ENCODE measurements at regions of chr3 and their contacts with region 1.

Region 1: DNA sequence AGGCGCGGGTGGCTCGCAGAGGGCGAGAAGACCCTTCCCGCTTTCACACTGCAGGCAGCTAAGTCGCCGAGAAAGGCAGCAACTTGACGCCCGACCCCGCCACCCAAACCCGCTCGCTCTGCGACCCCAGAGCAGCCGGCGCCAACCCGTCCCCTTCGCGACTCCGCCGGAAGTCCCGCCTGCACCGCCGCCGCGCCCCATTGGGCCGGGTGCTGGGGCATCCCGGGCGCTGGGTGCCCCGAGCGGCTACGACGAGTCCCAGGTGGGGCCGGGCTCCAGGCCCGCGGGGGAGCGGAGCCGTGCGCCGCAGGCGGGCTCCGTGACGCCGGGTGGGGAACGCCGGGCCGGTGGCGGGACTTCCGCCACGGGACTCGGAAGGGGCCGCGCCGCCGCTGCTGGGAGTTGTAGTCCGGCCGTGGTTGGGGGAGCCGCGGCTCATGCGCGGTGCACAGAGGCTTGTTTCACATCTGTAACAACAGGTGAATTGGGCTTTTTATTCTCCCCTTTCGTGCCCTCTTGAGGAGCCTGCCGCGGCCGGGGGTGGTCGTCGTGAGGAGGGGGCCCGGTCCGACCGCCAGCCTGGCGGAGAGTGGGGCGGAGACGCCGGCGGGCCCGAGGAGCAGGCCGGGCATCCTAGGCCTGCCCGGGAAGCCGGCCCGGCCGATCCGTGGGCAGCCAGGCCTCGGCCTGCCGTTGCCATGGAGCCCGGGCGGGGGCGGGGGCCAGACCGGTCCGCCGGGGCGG is at the start of gene DHX30:
- DNase-seq: peak; percentile 63 to 92 (median 83)
- ATAC-seq: peak; percentile 92
- H3K4me3 ChIP-seq: peak within 1 kb of the TSS; percentile 81 to 95
- H3K4me3 Mint-ChIP-seq: peak within 1 kb of the TSS; percentile 93
- H3K27ac ChIP-seq: peak within 1 kb of the TSS; percentile 73 to 82
- H3K27ac Mint-ChIP-seq: peak within 1 kb of the TSS; percentile 95
- H3K4me1 ChIP-seq: peaks cover 17% of the 10 kb centered on the region
- H3K4me1 Mint-ChIP-seq: peaks cover 21% of the 10 kb centered on the region
- H3K27me3 ChIP-seq: no peaks in the 10 kb centered on the region
- H3K27me3 Mint-ChIP-seq: no peaks in the 10 kb centered on the region
- CTCF ChIP-seq: no peak
- total RNA-seq, gene DHX30: 80.7 to 83.4 TPM

Region 2: GRCh38 chr3:47282424-47283192 is 520.3 kb before region 1 on chr3 and contains the starts of genes KIF9 and KLHL18:
- CTCF ChIA-PET with region 1: no interaction called
- POLR2A ChIA-PET with region 1: no interaction called
- intact Hi-C with region 1: loop called in 1 of 2 experiments (anchors 2 kb)
- DNase-seq: peak; percentile 92 to 99 (median 96)
- ATAC-seq: peak; percentile 86
- H3K4me3 ChIP-seq: peak within 1 kb of the TSS; percentile 75 to 79
- H3K4me3 Mint-ChIP-seq: peak within 1 kb of the TSS; percentile 97
- H3K27ac ChIP-seq: peak within 1 kb of the TSS; percentile 98 to 99
- H3K27ac Mint-ChIP-seq: peak within 1 kb of the TSS; percentile 99
- H3K4me1 ChIP-seq: peaks cover 32% of the 10 kb centered on the region
- H3K4me1 Mint-ChIP-seq: peaks cover 40% of the 10 kb centered on the region
- H3K27me3 ChIP-seq: no peaks in the 10 kb centered on the region
- H3K27me3 Mint-ChIP-seq: no peaks in the 10 kb centered on the region
- CTCF ChIP-seq: no peak
- total RNA-seq, gene KIF9: 11.7 to 12.2 TPM
- total RNA-seq, gene KLHL18: 61.6 to 62.8 TPM

Region 3: DNA sequence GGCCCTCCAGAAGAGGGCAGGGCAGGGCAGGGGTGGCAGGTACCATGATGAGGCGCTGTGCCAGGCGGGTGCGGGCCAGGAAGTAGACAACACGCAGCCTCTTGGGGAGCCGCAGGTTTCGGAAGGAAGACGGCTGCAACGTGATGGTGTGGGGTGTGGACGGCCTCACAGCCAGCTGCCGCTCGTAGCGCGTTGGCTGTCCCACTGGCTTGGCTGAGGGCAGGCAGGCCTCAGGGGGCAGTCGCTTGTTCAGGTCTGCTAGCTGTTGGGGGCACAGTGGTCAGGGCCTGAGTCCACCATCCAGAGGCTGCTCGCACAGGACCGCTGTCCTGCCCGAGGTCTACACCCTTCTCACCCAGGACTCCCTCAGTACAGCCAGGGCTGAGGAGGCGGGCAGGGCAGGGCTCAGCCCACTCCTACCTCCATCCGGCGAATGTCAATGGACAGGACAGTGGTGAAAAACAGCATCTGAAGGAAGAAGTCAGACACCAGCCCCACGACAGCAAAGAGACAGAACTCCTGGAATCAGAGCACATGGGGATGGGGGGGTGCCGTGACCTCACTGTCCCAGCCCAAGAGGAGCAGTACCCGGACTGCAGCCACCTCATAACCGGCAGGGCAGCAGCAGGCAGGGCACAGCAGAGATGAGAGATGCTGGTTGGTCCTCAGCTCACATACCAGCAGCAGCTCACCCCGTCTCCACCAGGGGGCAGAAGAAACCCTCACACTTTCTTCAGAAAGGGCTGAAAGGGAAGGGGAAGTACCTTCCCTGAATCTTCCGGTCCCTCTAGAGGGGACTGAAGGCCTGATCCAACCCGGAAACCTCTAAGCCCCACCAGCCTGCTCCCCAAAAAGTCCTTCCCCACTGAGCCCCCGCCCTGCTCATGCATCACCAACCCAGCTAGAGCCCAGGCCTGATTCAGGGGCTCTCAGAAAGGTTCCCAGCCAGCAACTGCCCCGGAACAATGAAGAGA is 382.1 kb before region 1 on chr3:
- CTCF ChIA-PET with region 1: interaction called, 6 read pairs
- POLR2A ChIA-PET with region 1: no interaction called
- intact Hi-C with region 1: loop called in 1 of 2 experiments (anchors 5 kb)
- DNase-seq: peak; percentile 79 to 93 (median 89)
- ATAC-seq: peak; percentile 99
- H3K4me3 ChIP-seq: peak overlapping the region in 1 of 2 experiments; percentile 32
- H3K4me3 Mint-ChIP-seq: peak overlapping the region; percentile 70
- H3K27ac ChIP-seq: peak overlapping the region; percentile 53 to 90
- H3K27ac Mint-ChIP-seq: peak overlapping the region; percentile 99
- H3K4me1 ChIP-seq: peaks cover 14% of the 10 kb centered on the region
- H3K4me1 Mint-ChIP-seq: peaks cover 15% of the 10 kb centered on the region
- H3K27me3 ChIP-seq: no peaks in the 10 kb centered on the region
- H3K27me3 Mint-ChIP-seq: no peaks in the 10 kb centered on the region
- CTCF ChIP-seq: peak; percentile 91

Region 4: GRCh38 chr3:47513125-47513929 is 289.6 kb before region 1 on chr3 and contains the start of gene ELP6:
- CTCF ChIA-PET with region 1: no interaction called
- POLR2A ChIA-PET with region 1: no interaction called
- intact Hi-C with region 1: loop called (anchors 1 kb)
- DNase-seq: peak; percentile 92 to 99 (median 96)
- ATAC-seq: peak; percentile 91
- H3K4me3 ChIP-seq: peak within 1 kb of the TSS; percentile 85 to 99
- H3K4me3 Mint-ChIP-seq: peak within 1 kb of the TSS; percentile 98
- H3K27ac ChIP-seq: peak within 1 kb of the TSS; percentile 88 to 95
- H3K27ac Mint-ChIP-seq: peak within 1 kb of the TSS; percentile 97
- H3K4me1 ChIP-seq: peaks cover 11% of the 10 kb centered on the region
- H3K4me1 Mint-ChIP-seq: peaks cover 22% of the 10 kb centered on the region
- H3K27me3 ChIP-seq: no peaks in the 10 kb centered on the region
- H3K27me3 Mint-ChIP-seq: no peaks in the 10 kb centered on the region
- CTCF ChIP-seq: peak; percentile 66
- total RNA-seq, gene ELP6: 13.0 to 13.7 TPM

Region 5: GRCh38 chr3:47781685-47782445 is 21.0 kb before region 1 on chr3 and contains the start of gene SMARCC1:
- CTCF ChIA-PET with region 1: no interaction called
- POLR2A ChIA-PET with region 1: no interaction called
- intact Hi-C with region 1: loop called (anchors 1 to 2 kb)
- DNase-seq: peak; percentile 91 to 99 (median 97)
- ATAC-seq: peak; percentile 87
- H3K4me3 ChIP-seq: peak within 1 kb of the TSS; percentile 54 to 91
- H3K4me3 Mint-ChIP-seq: peak within 1 kb of the TSS; percentile 89
- H3K27ac ChIP-seq: peak within 1 kb of the TSS; percentile 87 to 98
- H3K27ac Mint-ChIP-seq: peak within 1 kb of the TSS; percentile 97
- H3K4me1 ChIP-seq: peaks cover 23% of the 10 kb centered on the region
- H3K4me1 Mint-ChIP-seq: peaks cover 31% of the 10 kb centered on the region
- H3K27me3 ChIP-seq: no peaks in the 10 kb centered on the region
- H3K27me3 Mint-ChIP-seq: no peaks in the 10 kb centered on the region
- CTCF ChIP-seq: no peak
- total RNA-seq, gene SMARCC1: 65.4 to 68.2 TPM

Region 6: GRCh38 chr3:47824541-47825473 is 21.9 kb after region 1 on chr3:
- CTCF ChIA-PET with region 1: interaction called, 17 read pairs
- POLR2A ChIA-PET with region 1: interaction called, 4 read pairs
- intact Hi-C with region 1: loop called (anchors 1 kb)
- DNase-seq: peak; percentile 59 to 91 (median 75)
- ATAC-seq: peak; percentile 98
- H3K4me3 ChIP-seq: peak overlapping the region; percentile 67 to 95
- H3K4me3 Mint-ChIP-seq: peak overlapping the region; percentile 88
- H3K27ac ChIP-seq: peak overlapping the region; percentile 67 to 72
- H3K27ac Mint-ChIP-seq: peak overlapping the region; percentile 93
- H3K4me1 ChIP-seq: peaks cover 17% of the 10 kb centered on the region
- H3K4me1 Mint-ChIP-seq: peaks cover 32% of the 10 kb centered on the region
- H3K27me3 ChIP-seq: no peaks in the 10 kb centered on the region
- H3K27me3 Mint-ChIP-seq: no peaks in the 10 kb centered on the region
- CTCF ChIP-seq: peak; percentile 74

Region 7: DNA sequence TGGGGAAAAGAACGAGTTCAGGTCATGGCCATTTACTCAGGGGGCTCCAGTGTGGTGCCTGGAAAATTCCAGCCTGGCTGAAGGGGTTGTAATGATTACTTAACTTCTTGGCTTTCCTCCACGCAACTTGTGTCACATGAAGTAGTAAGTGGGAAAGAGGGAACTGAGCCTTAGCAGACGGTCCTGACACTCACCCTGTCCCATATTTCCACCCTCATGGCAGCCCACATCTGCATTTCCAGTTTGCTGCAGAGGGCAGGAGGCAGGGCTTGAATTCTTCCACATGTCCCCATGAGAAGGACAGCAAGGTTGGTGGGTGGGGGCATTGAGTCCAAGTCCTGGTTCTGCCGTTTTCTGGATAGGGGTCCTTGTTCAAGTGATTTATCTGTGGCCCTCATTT is 412.6 kb after region 1 on chr3:
- CTCF ChIA-PET with region 1: no interaction called
- POLR2A ChIA-PET with region 1: no interaction called
- intact Hi-C with region 1: no loop called
- DNase-seq: no peak
- ATAC-seq: no peak
- H3K4me3 ChIP-seq: no peak overlapping the region
- H3K4me3 Mint-ChIP-seq: no peak overlapping the region
- H3K27ac ChIP-seq: no peak overlapping the region
- H3K27ac Mint-ChIP-seq: no peak overlapping the region
- H3K4me1 ChIP-seq: no peaks in the 10 kb centered on the region
- H3K4me1 Mint-ChIP-seq: no peaks in the 10 kb centered on the region
- H3K27me3 ChIP-seq: no peaks in the 10 kb centered on the region
- H3K27me3 Mint-ChIP-seq: no peaks in the 10 kb centered on the region
- CTCF ChIP-seq: no peak